PC-9 (cell line): ENCODE measurements at regions of chr3 and their contacts with region 1.

Region 1: DNA sequence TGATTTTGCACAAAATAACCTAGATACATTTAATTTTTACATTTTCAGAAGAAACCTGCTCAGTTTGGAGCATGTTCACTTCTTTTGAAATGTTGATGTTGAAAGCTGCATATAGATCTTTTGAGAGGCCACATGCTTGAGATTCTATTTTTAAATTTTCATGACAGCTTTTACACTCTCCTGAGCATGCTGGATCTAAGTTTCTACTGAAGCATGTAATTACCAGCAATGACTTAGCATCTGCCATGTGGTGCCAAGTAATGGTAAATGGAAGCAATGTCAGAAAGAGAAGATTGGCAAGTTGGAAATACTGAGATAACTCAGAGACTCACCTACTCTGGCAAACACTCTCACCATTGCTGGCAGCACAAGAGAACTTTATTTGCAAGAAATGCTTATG is 310.6 kb downstream of the NSUN3 start:
- DNase-seq: no peak
- H3K4me3 ChIP-seq: no peak overlapping the region
- H3K27ac ChIP-seq: no peak overlapping the region
- H3K4me1 ChIP-seq: no peaks in the 10 kb centered on the region
- H3K27me3 ChIP-seq: no peaks in the 10 kb centered on the region
- CTCF ChIP-seq: no peak

Region 2: GRCh38 chr3:94433811-94434210 is 60.4 kb after region 1 on chr3:
- CTCF ChIA-PET with region 1: no interaction called
- POLR2A ChIA-PET with region 1: no interaction called
- intact Hi-C with region 1: loop called (anchors 10 kb)
- DNase-seq: no peak
- H3K4me3 ChIP-seq: no peak overlapping the region
- H3K27ac ChIP-seq: no peak overlapping the region
- H3K4me1 ChIP-seq: no peaks in the 10 kb centered on the region
- H3K27me3 ChIP-seq: no peaks in the 10 kb centered on the region
- CTCF ChIP-seq: no peak

Region 3: GRCh38 chr3:94500146-94500545 is 126.7 kb after region 1 on chr3:
- CTCF ChIA-PET with region 1: no interaction called
- POLR2A ChIA-PET with region 1: no interaction called
- intact Hi-C with region 1: loop called (anchors 10 kb)
- DNase-seq: no peak
- H3K4me3 ChIP-seq: no peak overlapping the region
- H3K27ac ChIP-seq: no peak overlapping the region
- H3K4me1 ChIP-seq: no peaks in the 10 kb centered on the region
- H3K27me3 ChIP-seq: no peaks in the 10 kb centered on the region
- CTCF ChIP-seq: no peak